K562 (cell line): ENCODE measurements at regions of chr2 and their contacts with region 1.

Region 1: DNA sequence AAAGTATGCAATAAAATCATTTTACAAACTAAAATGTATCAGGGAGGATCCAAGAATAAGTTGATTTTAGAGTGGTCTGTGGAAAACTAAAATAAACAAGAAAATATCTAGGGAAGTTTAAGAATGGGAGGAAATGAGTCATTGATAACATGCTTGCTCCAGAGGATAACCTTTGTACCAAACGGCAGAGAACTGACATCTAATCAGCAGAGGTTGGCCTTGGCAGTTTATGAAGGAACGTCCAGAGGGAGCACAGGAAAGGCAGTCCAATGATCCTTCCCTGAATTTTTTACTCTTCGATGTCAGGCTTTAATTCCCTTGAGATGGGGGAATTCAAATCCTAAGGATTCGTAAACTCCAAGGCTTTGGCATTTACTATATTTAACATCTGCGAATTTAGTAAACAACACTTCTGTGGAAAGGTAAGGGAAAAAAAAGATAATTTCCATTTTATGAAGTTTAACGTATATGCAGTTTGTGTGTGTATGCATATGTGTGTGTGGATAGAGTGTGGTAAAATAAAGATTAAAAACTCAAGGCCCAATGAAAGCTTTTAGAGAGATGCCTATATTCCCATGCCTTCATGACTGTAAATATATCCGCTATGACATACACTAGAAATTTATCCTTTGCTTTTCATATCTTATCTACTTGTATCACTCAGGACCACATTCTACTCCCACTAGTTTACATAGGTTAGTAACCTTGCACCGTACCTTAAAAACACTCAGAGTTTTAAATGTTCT is 8.7 kb upstream of the INPP1 start:
- DNase-seq: peak; percentile 16 to 69 (median 28)
- ATAC-seq: peak; percentile 73
- H3K4me3 ChIP-seq: peak overlapping the region; percentile 31
- H3K27ac ChIP-seq: peak overlapping the region; percentile 82
- H3K4me1 ChIP-seq: peaks cover 5 to 11% of the 10 kb centered on the region in 2 experiments; a peak in 4 of 5 replicates
- H3K27me3 ChIP-seq: no peaks in the 10 kb centered on the region
- CTCF ChIP-seq: no peak
- EP300 ChIP-seq: peak; percentile 92
- POLR2A ChIP-seq: peak; percentile 41; the same call in 1 of the 2 replicates
- RAD21 ChIP-seq: no peak

Region 2: DNA sequence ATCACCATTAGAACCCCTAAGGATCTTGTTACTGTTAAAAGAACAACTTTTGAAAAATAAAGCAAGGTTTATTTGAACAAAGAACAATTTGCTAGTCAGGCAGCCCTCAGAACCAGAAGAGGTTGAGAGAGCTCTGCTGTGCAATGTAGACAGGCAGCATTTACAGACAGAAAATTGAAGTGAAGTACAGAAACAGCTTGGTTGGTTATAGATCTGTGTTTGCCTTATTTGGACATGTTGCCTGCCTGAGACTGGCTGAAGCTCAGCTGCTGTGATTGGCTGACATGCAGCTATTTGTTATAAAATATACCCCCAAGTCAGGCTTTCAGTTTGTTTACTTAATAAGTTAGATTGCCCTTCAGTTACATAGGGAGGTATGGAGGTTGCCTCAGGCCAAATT is 284.6 kb before region 1 on chr2:
- CTCF ChIA-PET with region 1: no interaction called
- POLR2A ChIA-PET with region 1: no interaction called
- in situ Hi-C with region 1: no loop called
- intact Hi-C with region 1: no loop called
- DNase-seq: no peak
- ATAC-seq: 0 out of 3 replicates have a peak, but pooled peaks have one; percentile 41
- H3K4me3 ChIP-seq: no peak overlapping the region
- H3K27ac ChIP-seq: no peak overlapping the region
- H3K4me1 ChIP-seq: peaks cover 0 to under 1% of the 10 kb centered on the region in 2 experiments; a peak in 2 of 5 replicates
- H3K27me3 ChIP-seq: no peaks in the 10 kb centered on the region
- CTCF ChIP-seq: no peak
- EP300 ChIP-seq: no peak
- POLR2A ChIP-seq: no peak
- RAD21 ChIP-seq: no peak

Region 3: GRCh38 chr2:190304404-190304803 is 30.2 kb before region 1 on chr2:
- CTCF ChIA-PET with region 1: no interaction called
- POLR2A ChIA-PET with region 1: no interaction called
- in situ Hi-C with region 1: no loop called
- intact Hi-C with region 1: no loop called
- DNase-seq: no peak
- ATAC-seq: no peak
- H3K4me3 ChIP-seq: no peak overlapping the region
- H3K27ac ChIP-seq: no peak overlapping the region
- H3K4me1 ChIP-seq: peaks cover 0 to 2% of the 10 kb centered on the region in 2 experiments; a peak in 2 of 5 replicates
- H3K27me3 ChIP-seq: no peaks in the 10 kb centered on the region
- CTCF ChIP-seq: no peak
- EP300 ChIP-seq: no peak
- POLR2A ChIP-seq: no peak
- RAD21 ChIP-seq: no peak

Region 4: DNA sequence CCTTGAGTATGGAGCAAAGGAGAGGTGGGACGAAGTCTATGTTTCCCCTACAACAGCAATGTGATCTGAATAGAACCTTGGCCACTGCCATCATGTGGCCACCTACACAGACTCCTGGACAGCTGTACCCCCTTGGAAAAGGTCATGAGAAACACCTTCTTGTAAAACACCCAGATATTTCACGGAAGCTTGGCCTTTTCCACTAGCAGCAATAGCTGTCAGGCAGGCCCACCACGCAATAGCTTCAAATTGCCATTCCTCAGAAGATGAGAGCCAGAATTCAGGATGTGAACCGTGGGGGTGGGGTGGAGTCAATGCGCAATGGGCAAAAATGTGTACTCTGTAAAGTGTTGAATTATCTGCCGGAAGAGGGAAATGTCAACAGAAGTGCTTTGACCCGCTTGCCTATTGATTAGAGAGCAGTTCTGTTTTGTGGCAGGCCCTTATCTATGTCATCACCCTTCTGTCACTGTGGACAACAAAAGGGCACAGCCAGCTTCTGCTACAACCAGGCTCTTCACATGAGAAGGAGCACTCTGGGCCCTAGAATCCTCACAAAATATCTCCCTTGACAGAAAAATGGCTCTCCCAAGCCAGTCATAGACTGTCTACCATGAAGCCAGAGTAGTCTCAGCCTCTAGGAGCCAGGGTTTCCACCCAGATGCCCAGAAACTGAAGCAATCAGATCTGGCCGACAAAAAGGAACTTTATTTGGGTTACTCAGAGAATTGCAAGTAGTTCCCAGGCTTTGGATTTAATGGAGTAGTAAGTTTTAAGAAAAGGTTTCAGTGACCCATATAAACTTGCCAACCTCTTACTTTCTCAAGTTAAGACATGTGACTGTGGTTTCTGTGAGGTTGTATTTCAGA is 18.2 kb after region 1 on chr2:
- CTCF ChIA-PET with region 1: no interaction called
- POLR2A ChIA-PET with region 1: no interaction called
- in situ Hi-C with region 1: no loop called
- intact Hi-C with region 1: loop called (anchors 2 kb)
- DNase-seq: peak; percentile 22 to 77 (median 44)
- ATAC-seq: peak; percentile 76
- H3K4me3 ChIP-seq: no peak overlapping the region
- H3K27ac ChIP-seq: peak overlapping the region; percentile 57
- H3K4me1 ChIP-seq: peaks cover 0 to 43% of the 10 kb centered on the region in 2 experiments; a peak in 3 of 5 replicates
- H3K27me3 ChIP-seq: no peaks in the 10 kb centered on the region
- CTCF ChIP-seq: no peak
- EP300 ChIP-seq: peak; percentile 92
- POLR2A ChIP-seq: no peak
- RAD21 ChIP-seq: no peak

Region 5: GRCh38 chr2:190366248-190366753 is 31.6 kb after region 1 on chr2:
- CTCF ChIA-PET with region 1: no interaction called
- POLR2A ChIA-PET with region 1: no interaction called
- in situ Hi-C with region 1: no loop called
- intact Hi-C with region 1: no loop called
- DNase-seq: no peak
- ATAC-seq: no peak
- H3K4me3 ChIP-seq: no peak overlapping the region
- H3K27ac ChIP-seq: no peak overlapping the region
- H3K4me1 ChIP-seq: peaks cover 0 to 5% of the 10 kb centered on the region in 2 experiments; a peak in 3 of 5 replicates
- H3K27me3 ChIP-seq: no peaks in the 10 kb centered on the region
- CTCF ChIP-seq: no peak
- EP300 ChIP-seq: no peak
- POLR2A ChIP-seq: no peak
- RAD21 ChIP-seq: no peak

Region 6: GRCh38 chr2:190376591-190377245 is 42.1 kb after region 1 on chr2:
- CTCF ChIA-PET with region 1: no interaction called
- POLR2A ChIA-PET with region 1: no interaction called
- in situ Hi-C with region 1: no loop called
- intact Hi-C with region 1: loop called (anchors 2 kb)
- DNase-seq: no peak
- ATAC-seq: no peak
- H3K4me3 ChIP-seq: no peak overlapping the region
- H3K27ac ChIP-seq: no peak overlapping the region
- H3K4me1 ChIP-seq: peaks cover 5 to 32% of the 10 kb centered on the region in 2 experiments; a peak in 4 of 5 replicates
- H3K27me3 ChIP-seq: no peaks in the 10 kb centered on the region
- CTCF ChIP-seq: no peak
- EP300 ChIP-seq: no peak
- POLR2A ChIP-seq: no peak
- RAD21 ChIP-seq: no peak

Region 7: DNA sequence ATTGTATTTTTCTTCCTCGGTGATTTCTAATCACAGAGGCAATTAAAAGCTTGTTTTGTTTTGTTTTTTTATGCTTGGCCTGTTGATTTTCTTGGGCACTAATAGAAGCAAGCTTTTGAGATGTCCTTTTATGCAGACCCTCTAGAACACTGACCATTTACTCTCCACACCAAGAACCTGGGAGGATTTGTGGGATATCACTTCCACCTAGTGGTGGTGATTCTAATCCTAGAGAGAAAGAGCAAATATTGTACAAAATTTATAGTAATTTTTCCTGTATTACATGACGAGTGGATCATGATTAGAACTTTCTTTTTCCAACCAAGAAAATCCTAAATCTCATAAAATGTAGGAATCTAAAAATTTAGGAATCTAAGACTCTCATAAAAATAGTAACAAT is 176.5 kb after region 1 on chr2:
- CTCF ChIA-PET with region 1: no interaction called
- POLR2A ChIA-PET with region 1: no interaction called
- in situ Hi-C with region 1: no loop called
- intact Hi-C with region 1: loop called (anchors 2 kb)
- DNase-seq: peak in 2 of 4 experiments; percentile 43 to 58
- ATAC-seq: peak; percentile 86
- H3K4me3 ChIP-seq: no peak overlapping the region
- H3K27ac ChIP-seq: no peak overlapping the region
- H3K4me1 ChIP-seq: no peaks in the 10 kb centered on the region; a peak in 2 of 5 replicates
- H3K27me3 ChIP-seq: no peaks in the 10 kb centered on the region
- CTCF ChIP-seq: peak; percentile 44 to 69 (median 50); a peak in 4 of 6 replicates
- EP300 ChIP-seq: no peak
- POLR2A ChIP-seq: no peak
- RAD21 ChIP-seq: peak; percentile 78 to 90

Region 8: DNA sequence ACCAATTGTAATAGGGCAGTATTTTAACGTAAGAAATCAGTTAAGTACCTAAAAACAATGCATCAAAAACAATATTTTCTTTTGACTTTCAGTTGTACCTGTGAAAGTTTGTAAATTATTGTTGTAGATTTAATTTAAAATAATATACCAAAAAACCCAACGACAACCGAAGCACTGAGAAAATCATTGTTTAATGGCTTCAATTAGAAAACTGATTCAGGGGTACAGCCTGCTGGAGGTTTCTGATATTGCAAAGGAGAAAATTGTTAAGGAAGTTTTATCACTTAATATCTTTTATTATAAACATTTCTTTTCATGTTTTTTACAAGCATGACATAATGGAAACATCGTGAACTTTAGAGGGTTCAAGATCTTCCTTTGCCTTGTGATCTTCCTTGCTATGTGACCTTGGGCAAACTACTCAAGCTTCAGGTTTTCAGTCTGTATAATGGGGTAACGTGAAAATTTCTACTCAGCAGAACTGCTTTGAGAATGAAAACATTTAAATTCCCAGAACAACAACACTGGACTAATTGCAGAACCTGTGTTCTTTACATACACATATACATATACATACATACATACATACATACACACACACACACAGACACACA is 469.6 kb after region 1 on chr2:
- CTCF ChIA-PET with region 1: no interaction called
- POLR2A ChIA-PET with region 1: no interaction called
- in situ Hi-C with region 1: no loop called
- intact Hi-C with region 1: loop called (anchors 10 kb)
- DNase-seq: peak in 1 of 4 experiments; percentile 13
- ATAC-seq: no peak
- H3K4me3 ChIP-seq: no peak overlapping the region
- H3K27ac ChIP-seq: no peak overlapping the region
- H3K4me1 ChIP-seq: no peaks in the 10 kb centered on the region; a peak in 1 of 5 replicates
- H3K27me3 ChIP-seq: no peaks in the 10 kb centered on the region
- CTCF ChIP-seq: peak; percentile 22 to 63 (median 43); a peak in 4 of 6 replicates
- EP300 ChIP-seq: no peak
- POLR2A ChIP-seq: no peak
- RAD21 ChIP-seq: peak; percentile 56 to 63